Body of pancreas (tissue), 4 donors: ENCODE measurements at regions of chr10 and their contacts with region 1.

Region 1: DNA sequence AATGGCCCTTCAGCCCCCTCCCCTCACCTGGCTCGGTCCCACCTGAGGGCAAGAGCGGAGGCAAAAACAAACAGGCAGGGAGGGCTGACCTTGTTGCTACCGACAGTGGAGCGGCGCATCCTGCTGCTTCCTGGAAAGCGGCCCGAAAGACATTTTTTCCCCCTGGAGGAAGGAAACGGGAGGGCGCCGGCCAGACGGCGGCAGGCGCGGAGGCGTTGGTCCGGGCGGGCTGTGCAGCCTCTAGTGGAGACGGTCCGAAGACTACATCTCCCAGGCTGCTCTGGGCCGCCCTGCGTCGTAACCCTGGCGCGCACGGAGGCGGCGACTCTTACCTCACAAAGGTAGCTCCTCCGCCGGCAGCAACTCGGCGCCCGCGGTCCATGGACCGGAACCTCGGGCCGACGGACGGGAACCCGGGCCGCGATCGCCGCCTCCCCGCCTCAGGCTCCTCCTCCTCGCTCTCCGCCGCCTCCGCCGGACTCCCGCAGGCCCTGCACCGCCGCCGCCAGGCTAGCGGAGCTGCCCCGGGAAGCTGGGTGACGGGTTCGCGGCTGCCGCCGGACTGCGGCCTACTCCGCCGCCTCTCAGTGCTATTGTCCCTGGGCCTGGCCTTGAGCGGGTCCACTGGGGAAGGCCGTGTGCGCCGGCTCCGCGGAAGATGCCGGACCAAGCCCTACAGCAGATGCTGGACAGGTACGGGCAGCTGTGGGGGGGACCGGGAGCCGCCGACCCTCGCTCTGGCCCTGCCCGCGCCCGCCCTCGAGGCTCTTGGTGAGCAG is at the starts of genes CPEB3 and MARCHF5:
- DNase-seq: peak; percentile 97 to 98 (median 98)
- ATAC-seq: peak; percentile 98
- H3K4me3 ChIP-seq: peak within 1 kb of the TSS; percentile 81 to 99
- H3K27ac ChIP-seq: peak within 1 kb of the TSS; percentile 86 to 96 (median 91)
- H3K4me1 ChIP-seq: peaks cover 12% of the 10 kb centered on the region
- H3K27me3 ChIP-seq: no peaks in the 10 kb centered on the region
- CTCF ChIP-seq: peak; percentile 53 to 94 (median 88)
- POLR2A ChIP-seq: peak; percentile 83 to 89 (median 85)
- total RNA-seq, gene CPEB3: 9.3 to 10.2 TPM
- total RNA-seq, gene MARCHF5: 11.2 to 19.4 TPM

Region 2: DNA sequence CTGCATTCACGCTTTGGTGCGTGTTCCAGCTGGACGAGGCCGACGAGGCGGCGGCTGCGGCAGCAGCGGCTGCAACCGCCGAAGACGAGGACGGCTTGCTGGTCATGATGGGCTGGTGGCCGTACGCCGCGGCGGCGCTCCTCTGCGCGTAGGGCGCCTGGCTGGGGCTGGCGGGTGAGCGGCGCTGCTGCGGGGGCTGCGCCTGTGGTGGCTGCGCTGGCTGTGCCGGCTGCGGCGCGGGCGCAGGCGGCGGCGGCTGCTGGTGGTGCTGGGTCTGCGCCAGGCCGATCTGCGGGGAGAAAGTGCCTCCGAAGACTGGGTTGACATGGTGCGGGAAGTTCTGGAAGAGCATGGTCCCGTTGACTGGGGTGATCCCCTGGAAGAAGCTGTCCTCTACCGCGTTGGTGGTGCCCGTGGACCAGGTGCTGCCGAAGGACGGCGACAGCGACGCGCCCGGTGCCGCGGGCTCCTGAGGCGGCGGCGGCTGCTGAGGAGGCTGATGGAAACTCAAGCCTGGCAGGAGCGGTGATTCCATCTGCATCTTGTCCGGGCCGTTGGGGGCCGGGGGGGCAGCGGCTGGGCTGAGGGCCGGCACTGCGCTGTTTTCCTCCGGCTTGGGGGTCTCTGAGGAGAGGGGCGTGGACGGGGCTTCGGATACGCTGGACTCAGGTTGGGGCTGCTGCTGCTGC is 51.3 kb before region 1 on chr10:
- intact Hi-C with region 1: loop called (anchors 10 kb)
- DNase-seq: peak; percentile 43 to 69 (median 58)
- ATAC-seq: peak; percentile 57
- H3K4me3 ChIP-seq: peak overlapping the region; percentile 60 to 68
- H3K27ac ChIP-seq: peak overlapping the region; percentile 74 to 87 (median 86)
- H3K4me1 ChIP-seq: peaks cover 56% of the 10 kb centered on the region
- H3K27me3 ChIP-seq: no peaks in the 10 kb centered on the region
- CTCF ChIP-seq: no peak
- POLR2A ChIP-seq: peak in 2 of 3 donors; percentile 8 to 33

Region 3: GRCh38 chr10:92381543-92381954 is 90.5 kb after region 1 on chr10:
- intact Hi-C with region 1: no loop called
- DNase-seq: no peak
- ATAC-seq: no peak
- H3K4me3 ChIP-seq: no peak overlapping the region
- H3K27ac ChIP-seq: no peak overlapping the region
- H3K4me1 ChIP-seq: no peaks in the 10 kb centered on the region
- H3K27me3 ChIP-seq: peaks cover 0 to 3% of the 10 kb centered on the region in 2 donors
- CTCF ChIP-seq: no peak
- POLR2A ChIP-seq: no peak

Region 4: DNA sequence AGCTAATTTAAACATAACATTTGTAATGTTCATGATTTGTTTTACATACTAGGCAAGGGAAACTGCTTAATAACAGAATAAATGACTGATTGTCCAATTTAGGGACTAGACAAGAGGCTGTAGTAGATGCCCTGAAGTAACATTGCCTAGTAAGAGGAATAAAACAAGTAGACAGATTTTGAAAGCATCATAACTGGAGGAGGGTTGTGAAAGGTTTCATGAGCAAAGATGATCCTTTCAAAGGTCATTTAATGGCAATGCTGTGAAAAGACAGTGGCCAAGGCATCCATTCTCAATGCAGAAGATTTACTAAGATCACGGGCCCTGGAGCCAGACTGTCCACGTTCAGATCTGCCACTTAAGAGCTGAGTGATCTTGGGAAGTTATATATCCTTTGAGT is 353.9 kb after region 1 on chr10:
- intact Hi-C with region 1: no loop called
- DNase-seq: no peak
- ATAC-seq: no peak
- H3K4me3 ChIP-seq: no peak overlapping the region
- H3K27ac ChIP-seq: no peak overlapping the region
- H3K4me1 ChIP-seq: peaks cover 3% of the 10 kb centered on the region
- H3K27me3 ChIP-seq: no peaks in the 10 kb centered on the region
- CTCF ChIP-seq: no peak
- POLR2A ChIP-seq: no peak